ENCODE measurements at regions of chr20 and their contacts with region 1.

Region 1: DNA sequence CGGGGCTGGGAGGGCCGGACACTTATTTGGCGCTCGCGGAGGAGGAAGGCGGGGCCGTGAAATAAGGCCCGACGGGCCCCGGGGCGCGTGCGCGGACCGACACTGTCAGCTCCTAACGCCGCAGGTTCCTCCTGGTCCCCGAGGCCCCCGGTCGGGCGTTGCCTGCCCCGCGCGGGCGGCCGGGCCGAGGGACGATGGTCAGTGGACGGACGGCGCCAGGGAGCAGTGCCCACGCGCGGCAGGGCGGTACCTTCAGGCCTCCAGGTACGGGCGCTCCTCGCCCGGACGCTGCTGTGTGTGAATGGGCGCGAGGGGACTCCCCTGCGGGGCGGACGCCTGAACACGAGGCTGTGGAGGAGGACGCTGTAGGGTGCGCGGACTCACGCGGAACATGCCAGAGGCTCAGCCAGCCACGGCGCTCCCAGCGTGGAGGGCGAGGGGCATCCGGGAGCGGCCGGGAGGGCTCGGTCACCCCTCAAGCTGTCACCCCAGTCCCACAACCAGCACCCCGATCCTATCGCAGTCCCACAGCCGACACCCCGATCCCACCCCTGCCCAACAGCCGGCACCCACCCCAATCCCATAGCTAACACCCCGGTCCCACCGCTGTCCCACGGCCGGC is 339 bp upstream of the GMEB2 start:
- DNase-seq: peak; percentile 76 to 97
- H3K4me3 ChIP-seq: peak overlapping the region; percentile 79 to 100
- H3K27ac ChIP-seq: peak overlapping the region; percentile 89 to 98
- H3K4me1 ChIP-seq: peaks cover 6 to 7% of the 10 kb centered on the region in 2 donors
- H3K27me3 ChIP-seq: no peaks in the 10 kb centered on the region
- CTCF ChIP-seq: no peak

Region 2: DNA sequence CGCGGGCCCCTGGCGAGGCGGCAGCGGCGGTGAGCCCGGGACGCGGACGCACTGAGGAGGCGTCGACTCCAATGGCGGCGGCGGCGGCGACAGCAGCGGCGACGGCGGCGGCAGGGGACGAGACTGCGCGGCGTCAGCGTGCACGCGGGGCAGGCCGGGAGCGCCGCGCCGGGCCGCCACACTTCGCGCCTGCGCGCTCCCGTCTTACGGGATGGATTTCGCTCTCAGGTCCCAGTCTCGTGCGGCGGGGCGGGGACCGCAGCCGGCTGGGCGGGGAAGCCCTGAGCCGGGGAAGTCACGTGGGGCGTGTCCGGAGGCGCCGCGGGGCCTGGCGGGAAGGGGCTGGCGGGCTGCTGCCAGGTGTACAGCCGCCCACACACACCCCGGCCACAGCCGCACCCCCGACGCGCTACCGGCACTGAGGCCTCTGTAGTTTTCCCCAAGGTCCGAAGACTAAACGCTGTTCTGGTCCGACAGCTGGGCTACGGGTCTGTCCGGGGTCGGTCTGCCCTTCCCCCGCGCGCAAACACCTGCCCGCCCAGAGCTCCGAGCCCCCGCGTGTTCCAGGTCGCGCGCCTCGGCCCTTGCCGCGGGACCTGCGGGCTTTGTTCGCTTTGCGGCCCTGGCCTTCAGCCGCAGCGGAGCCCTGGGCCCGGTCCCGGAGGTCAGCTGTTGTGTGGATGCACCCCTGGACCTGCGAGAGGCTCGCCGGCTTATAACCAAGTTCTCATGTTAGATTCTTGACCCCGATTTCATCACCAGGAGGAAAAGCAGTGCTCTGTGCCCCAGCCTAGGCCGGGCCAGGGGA is 411.0 kb before region 1 on chr20 and contains the start of gene YTHDF1:
- intact Hi-C with region 1: loop called (anchors 10 kb)
- DNase-seq: peak; percentile 87 to 97
- H3K4me3 ChIP-seq: peak within 1 kb of the TSS; percentile 98
- H3K27ac ChIP-seq: peak within 1 kb of the TSS; percentile 73 to 84
- H3K4me1 ChIP-seq: peaks cover 0 to 18% of the 10 kb centered on the region in 2 donors
- H3K27me3 ChIP-seq: no peaks in the 10 kb centered on the region
- CTCF ChIP-seq: no peak
- total RNA-seq, gene YTHDF1: 14.2 TPM

Region 3: GRCh38 chr20:63402184-63402859 is 224.9 kb before region 1 on chr20:
- intact Hi-C with region 1: no loop called
- DNase-seq: no peak
- H3K4me3 ChIP-seq: no peak overlapping the region
- H3K27ac ChIP-seq: no peak overlapping the region
- H3K4me1 ChIP-seq: no peaks in the 10 kb centered on the region
- H3K27me3 ChIP-seq: no peaks in the 10 kb centered on the region
- CTCF ChIP-seq: no peak

Region 4: GRCh38 chr20:63657937-63658748 is 30.9 kb after region 1 on chr20 and contains the start of gene RTEL1:
- intact Hi-C with region 1: loop called (anchors 1 kb)
- DNase-seq: peak; percentile 59 to 96
- H3K4me3 ChIP-seq: peak within 1 kb of the TSS; percentile 67 to 83
- H3K27ac ChIP-seq: peak within 1 kb of the TSS; percentile 78 to 88
- H3K4me1 ChIP-seq: peaks cover 7 to 18% of the 10 kb centered on the region in 2 donors
- H3K27me3 ChIP-seq: no peaks in the 10 kb centered on the region
- CTCF ChIP-seq: no peak
- total RNA-seq, gene RTEL1: 80.6 TPM

Region 5: GRCh38 chr20:63707549-63708300 is 80.5 kb after region 1 on chr20 and contains the starts of genes ARFRP1 and ZGPAT:
- intact Hi-C with region 1: no loop called
- DNase-seq: peak in 1 of 2 donors; percentile 94
- H3K4me3 ChIP-seq: peak within 1 kb of the TSS; percentile 80 to 88
- H3K27ac ChIP-seq: peak within 1 kb of the TSS; percentile 86 to 94
- H3K4me1 ChIP-seq: peaks cover 6 to 14% of the 10 kb centered on the region in 2 donors
- H3K27me3 ChIP-seq: no peaks in the 10 kb centered on the region
- CTCF ChIP-seq: no peak
- total RNA-seq, gene ARFRP1: 50.8 TPM
- total RNA-seq, gene ZGPAT: 42.4 TPM

Region 6: DNA sequence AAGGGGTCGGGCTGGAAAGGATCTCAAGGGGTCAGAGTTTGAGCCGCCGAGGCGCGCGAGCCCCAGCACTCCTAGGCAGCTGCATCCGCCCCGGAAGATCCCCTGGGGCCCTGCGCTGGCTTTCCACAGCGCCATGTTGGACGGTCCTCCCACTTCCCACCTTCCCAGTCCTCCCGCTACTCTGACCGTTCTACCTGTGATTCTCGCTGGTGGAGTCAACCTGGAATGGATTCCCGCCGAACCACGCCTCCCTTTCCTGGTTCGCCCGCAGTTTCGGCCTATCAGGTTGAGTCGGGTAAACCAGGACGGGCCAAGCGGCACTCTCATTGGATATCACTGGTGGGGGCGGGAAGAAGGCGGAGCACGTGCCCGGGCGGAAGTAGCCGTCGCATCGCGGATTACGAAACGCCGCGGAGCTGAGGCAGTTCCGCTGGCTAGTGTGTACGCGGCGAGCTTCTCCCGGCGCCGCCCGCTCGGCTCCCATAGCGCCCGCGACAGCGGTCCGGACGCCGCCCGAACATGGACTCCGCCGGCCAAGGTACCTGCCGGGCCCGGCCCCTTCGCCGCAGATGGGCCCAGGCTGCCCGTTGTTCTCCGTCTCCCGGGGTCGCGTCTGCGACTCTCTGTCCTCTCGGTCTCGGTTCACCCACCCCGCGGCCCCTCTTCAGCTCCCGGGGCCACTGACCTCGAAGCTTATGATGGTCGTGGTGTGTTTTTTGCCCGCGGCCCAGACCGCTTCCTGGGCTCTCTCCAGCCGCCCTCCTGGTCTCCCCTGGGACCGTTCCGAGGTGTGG is 237.8 kb after region 1 on chr20 and contains the start of gene TPD52L2:
- intact Hi-C with region 1: loop called (anchors 5 kb)
- DNase-seq: peak; percentile 95 to 99
- H3K4me3 ChIP-seq: peak within 1 kb of the TSS; percentile 77 to 92
- H3K27ac ChIP-seq: peak within 1 kb of the TSS; percentile 92 to 98
- H3K4me1 ChIP-seq: peaks cover 0 to 22% of the 10 kb centered on the region in 2 donors
- H3K27me3 ChIP-seq: no peaks in the 10 kb centered on the region
- CTCF ChIP-seq: peak in 1 of 3 experiments; percentile 5
- total RNA-seq, gene TPD52L2: 161 TPM

Region 7: DNA sequence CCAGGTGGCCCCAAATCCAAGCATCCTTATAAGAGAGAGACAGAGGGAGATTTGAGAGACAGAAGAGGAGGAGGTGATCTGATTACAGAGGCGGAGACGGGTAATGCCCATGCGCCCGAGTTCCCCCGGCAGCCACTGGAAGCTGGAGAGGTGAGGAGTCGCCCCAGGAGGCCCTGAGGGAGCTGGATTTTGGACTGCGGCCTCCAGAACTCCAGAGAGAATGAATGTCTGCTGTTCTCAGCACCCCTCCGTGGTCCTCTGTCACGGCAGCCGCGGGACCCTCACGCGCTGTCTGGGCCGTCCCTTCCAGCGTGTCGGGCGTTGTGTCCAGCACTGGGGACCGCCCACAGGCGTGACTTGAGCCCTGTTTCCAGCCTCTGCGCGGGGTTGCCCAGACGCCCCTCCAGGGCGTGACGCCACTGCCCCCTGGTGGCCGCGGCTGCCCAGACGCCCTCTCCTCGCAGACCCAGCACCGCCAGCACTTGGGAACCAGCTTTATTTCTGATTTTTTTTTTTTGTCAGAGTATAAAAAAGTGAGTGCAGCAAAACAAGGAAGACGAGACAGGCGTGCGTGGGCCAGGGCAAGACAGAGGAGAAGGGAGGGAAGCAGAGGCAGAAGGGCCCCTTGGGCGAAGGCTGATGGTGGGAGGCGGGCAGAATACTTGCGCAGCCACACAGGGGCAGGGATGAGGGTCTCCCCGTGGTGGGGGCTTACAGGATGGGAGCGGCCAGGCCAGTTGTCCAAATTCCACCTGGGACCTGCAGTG is 346.6 kb after region 1 on chr20:
- intact Hi-C with region 1: loop called (anchors 5 kb)
- DNase-seq: peak in 1 of 2 donors; percentile 90
- H3K4me3 ChIP-seq: peak overlapping the region; percentile 48 to 52
- H3K27ac ChIP-seq: no peak overlapping the region
- H3K4me1 ChIP-seq: peaks cover 9 to 11% of the 10 kb centered on the region in 2 donors
- H3K27me3 ChIP-seq: no peaks in the 10 kb centered on the region
- CTCF ChIP-seq: peak; percentile 95 to 100 (median 98)

Measured in ascending aorta (tissue), 2 donors.